CD8-positive, alpha-beta memory T cell (primary cell): ENCODE measurements at regions of chr13 and their contacts with region 1.

Region 1: GRCh38 chr13:30114571-30115256 is 192.6 kb downstream of the KATNAL1 start:
- DNase-seq: peak; percentile 86 to 93 (median 87)
- H3K4me3 ChIP-seq: peak overlapping the region; percentile 47
- H3K4me3 Mint-ChIP-seq: peak overlapping the region; percentile 76 to 94 (median 86)
- H3K27ac ChIP-seq: no peak overlapping the region
- H3K27ac Mint-ChIP-seq: peak overlapping the region; percentile 2 to 93 (median 77)
- H3K4me1 ChIP-seq: peaks cover 21% of the 10 kb centered on the region
- H3K4me1 Mint-ChIP-seq: peaks cover 23 to 39% (median 34%) of the 10 kb centered on the region in 3 donors
- H3K27me3 ChIP-seq: no peaks in the 10 kb centered on the region
- H3K27me3 Mint-ChIP-seq: peaks cover 0 to 2% of the 10 kb centered on the region in 2 donors

Region 2: DNA sequence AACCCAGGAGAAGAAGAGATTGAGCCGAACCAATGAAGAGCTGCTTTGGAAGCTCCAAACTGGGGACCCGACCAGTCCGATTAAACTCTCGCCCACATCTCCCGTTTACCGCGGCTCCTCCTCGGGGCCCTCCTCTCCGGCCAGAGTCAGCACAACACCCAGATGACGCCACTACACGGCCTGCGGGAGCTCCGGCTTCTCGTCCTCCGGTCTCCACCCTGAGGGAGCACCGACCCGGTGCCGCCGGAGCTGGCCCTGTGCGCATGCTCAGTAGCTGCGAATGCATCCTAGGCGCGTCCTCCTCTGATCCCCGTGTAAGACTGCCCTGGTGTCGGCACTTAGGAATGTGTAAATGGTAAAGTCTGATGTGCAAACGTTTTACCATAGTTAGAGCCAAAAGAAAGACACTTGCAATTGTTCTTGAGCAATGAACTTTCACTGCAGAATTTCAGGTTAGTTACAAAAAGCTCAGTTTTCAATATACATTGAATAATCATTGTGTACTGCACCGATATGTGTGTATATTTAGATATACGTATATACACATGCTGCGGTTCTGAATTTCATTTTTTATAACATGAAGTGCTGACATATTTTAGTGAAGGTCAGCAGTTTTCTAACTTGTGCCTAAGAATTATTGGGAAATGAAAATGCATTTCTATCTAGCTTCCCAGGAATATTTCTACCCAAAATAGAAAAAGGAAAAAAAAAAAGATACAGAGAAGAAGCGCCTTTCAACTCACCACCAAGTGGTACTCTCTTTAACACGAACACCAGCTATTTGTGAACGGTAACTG is 611.5 kb before region 1 on chr13:
- CTCF ChIA-PET with region 1: interaction called, 30 read pairs
- POLR2A ChIA-PET with region 1: no interaction called
- DNase-seq: no peak
- H3K4me3 ChIP-seq: no peak overlapping the region
- H3K4me3 Mint-ChIP-seq: no peak overlapping the region
- H3K27ac ChIP-seq: no peak overlapping the region
- H3K27ac Mint-ChIP-seq: no peak overlapping the region
- H3K4me1 ChIP-seq: no peaks in the 10 kb centered on the region
- H3K4me1 Mint-ChIP-seq: no peaks in the 10 kb centered on the region
- H3K27me3 ChIP-seq: no peaks in the 10 kb centered on the region
- H3K27me3 Mint-ChIP-seq: peaks cover 10 to 38% of the 10 kb centered on the region in 2 donors

Region 3: GRCh38 chr13:29782798-29783197 is 331.9 kb before region 1 on chr13:
- CTCF ChIA-PET with region 1: interaction called, 11 read pairs
- POLR2A ChIA-PET with region 1: no interaction called
- DNase-seq: no peak
- H3K4me3 ChIP-seq: no peak overlapping the region
- H3K4me3 Mint-ChIP-seq: no peak overlapping the region
- H3K27ac ChIP-seq: no peak overlapping the region
- H3K27ac Mint-ChIP-seq: peak overlapping the region in 1 of 8 donors; percentile 63
- H3K4me1 ChIP-seq: no peaks in the 10 kb centered on the region
- H3K4me1 Mint-ChIP-seq: peaks cover 38 to 72% (median 64%) of the 10 kb centered on the region in 3 donors
- H3K27me3 ChIP-seq: no peaks in the 10 kb centered on the region
- H3K27me3 Mint-ChIP-seq: no peaks in the 10 kb centered on the region

Region 4: GRCh38 chr13:29923554-29924481 is 190.9 kb before region 1 on chr13:
- CTCF ChIA-PET with region 1: interaction called, 12 read pairs
- POLR2A ChIA-PET with region 1: no interaction called
- DNase-seq: peak; percentile 23 to 74 (median 39)
- H3K4me3 ChIP-seq: no peak overlapping the region
- H3K4me3 Mint-ChIP-seq: peak overlapping the region in 1 of 7 donors; percentile 18
- H3K27ac ChIP-seq: no peak overlapping the region
- H3K27ac Mint-ChIP-seq: no peak overlapping the region
- H3K4me1 ChIP-seq: peaks cover 5% of the 10 kb centered on the region
- H3K4me1 Mint-ChIP-seq: peaks cover 7 to 52% (median 25%) of the 10 kb centered on the region in 3 donors
- H3K27me3 ChIP-seq: no peaks in the 10 kb centered on the region
- H3K27me3 Mint-ChIP-seq: peaks cover 0 to 2% of the 10 kb centered on the region in 2 donors

Region 5: DNA sequence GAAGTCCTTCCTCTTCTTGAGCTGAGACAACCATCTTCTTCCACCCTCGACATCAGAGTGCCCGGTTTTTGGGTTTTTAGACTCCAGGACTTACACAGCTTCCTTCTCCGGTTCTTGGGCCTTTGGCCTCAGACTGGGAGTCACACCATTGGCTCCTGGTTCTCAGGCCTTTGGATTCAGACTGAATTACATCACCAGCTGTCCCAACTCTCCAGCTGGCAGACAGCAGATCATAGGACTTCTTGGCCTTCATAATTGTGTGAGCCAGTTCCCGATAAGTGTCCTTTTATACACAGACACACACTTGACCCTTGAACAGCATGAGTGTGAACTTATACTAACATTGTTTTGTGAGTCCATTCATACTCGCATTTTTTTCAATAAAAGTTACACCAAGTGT is 98.3 kb before region 1 on chr13:
- CTCF ChIA-PET with region 1: no interaction called
- POLR2A ChIA-PET with region 1: no interaction called
- DNase-seq: no peak
- H3K4me3 ChIP-seq: no peak overlapping the region
- H3K4me3 Mint-ChIP-seq: no peak overlapping the region
- H3K27ac ChIP-seq: no peak overlapping the region
- H3K27ac Mint-ChIP-seq: no peak overlapping the region
- H3K4me1 ChIP-seq: no peaks in the 10 kb centered on the region
- H3K4me1 Mint-ChIP-seq: peaks cover 0 to 6% (median 6%) of the 10 kb centered on the region in 3 donors
- H3K27me3 ChIP-seq: no peaks in the 10 kb centered on the region
- H3K27me3 Mint-ChIP-seq: peaks cover 7 to 36% of the 10 kb centered on the region in 2 donors

Region 6: GRCh38 chr13:30071969-30072817 is 42.5 kb before region 1 on chr13:
- CTCF ChIA-PET with region 1: no interaction called
- POLR2A ChIA-PET with region 1: no interaction called
- DNase-seq: no peak
- H3K4me3 ChIP-seq: no peak overlapping the region
- H3K4me3 Mint-ChIP-seq: no peak overlapping the region
- H3K27ac ChIP-seq: no peak overlapping the region
- H3K27ac Mint-ChIP-seq: peak overlapping the region in 1 of 8 donors; percentile 34
- H3K4me1 ChIP-seq: no peaks in the 10 kb centered on the region
- H3K4me1 Mint-ChIP-seq: no peaks in the 10 kb centered on the region
- H3K27me3 ChIP-seq: no peaks in the 10 kb centered on the region
- H3K27me3 Mint-ChIP-seq: peaks cover 4 to 9% of the 10 kb centered on the region in 2 donors

Region 7: GRCh38 chr13:30103132-30103840 is 11.4 kb before region 1 on chr13:
- CTCF ChIA-PET with region 1: interaction called, 11 read pairs
- POLR2A ChIA-PET with region 1: no interaction called
- DNase-seq: no peak
- H3K4me3 ChIP-seq: no peak overlapping the region
- H3K4me3 Mint-ChIP-seq: no peak overlapping the region
- H3K27ac ChIP-seq: no peak overlapping the region
- H3K27ac Mint-ChIP-seq: no peak overlapping the region
- H3K4me1 ChIP-seq: no peaks in the 10 kb centered on the region
- H3K4me1 Mint-ChIP-seq: no peaks in the 10 kb centered on the region
- H3K27me3 ChIP-seq: no peaks in the 10 kb centered on the region
- H3K27me3 Mint-ChIP-seq: peaks cover 4 to 15% of the 10 kb centered on the region in 2 donors

Region 8: GRCh38 chr13:30148171-30148754 is 33.5 kb after region 1 on chr13:
- CTCF ChIA-PET with region 1: interaction called, 10 read pairs
- POLR2A ChIA-PET with region 1: no interaction called
- DNase-seq: peak; percentile 33 to 81 (median 58)
- H3K4me3 ChIP-seq: peak overlapping the region; percentile 8
- H3K4me3 Mint-ChIP-seq: peak overlapping the region; percentile 4 to 77 (median 76)
- H3K27ac ChIP-seq: peak overlapping the region; percentile 60
- H3K27ac Mint-ChIP-seq: peak overlapping the region; percentile 93 to 100 (median 97)
- H3K4me1 ChIP-seq: peaks cover 81% of the 10 kb centered on the region
- H3K4me1 Mint-ChIP-seq: peaks cover 88 to 99% (median 97%) of the 10 kb centered on the region in 3 donors
- H3K27me3 ChIP-seq: no peaks in the 10 kb centered on the region
- H3K27me3 Mint-ChIP-seq: peaks cover 0 to 2% of the 10 kb centered on the region in 2 donors

Region 9: GRCh38 chr13:30196025-30196424 is 81.3 kb after region 1 on chr13:
- CTCF ChIA-PET with region 1: no interaction called
- POLR2A ChIA-PET with region 1: no interaction called
- DNase-seq: no peak
- H3K4me3 ChIP-seq: no peak overlapping the region
- H3K4me3 Mint-ChIP-seq: no peak overlapping the region
- H3K27ac ChIP-seq: no peak overlapping the region
- H3K27ac Mint-ChIP-seq: peak overlapping the region in 2 of 8 donors; percentile 3 to 23
- H3K4me1 ChIP-seq: no peaks in the 10 kb centered on the region
- H3K4me1 Mint-ChIP-seq: peaks cover 0 to under 1% (median 0%) of the 10 kb centered on the region in 3 donors
- H3K27me3 ChIP-seq: no peaks in the 10 kb centered on the region
- H3K27me3 Mint-ChIP-seq: peaks cover 0 to 1% of the 10 kb centered on the region in 2 donors